MCF 10A (cell line): ENCODE measurements at regions of chr9 and their contacts with region 1.

Region 1: DNA sequence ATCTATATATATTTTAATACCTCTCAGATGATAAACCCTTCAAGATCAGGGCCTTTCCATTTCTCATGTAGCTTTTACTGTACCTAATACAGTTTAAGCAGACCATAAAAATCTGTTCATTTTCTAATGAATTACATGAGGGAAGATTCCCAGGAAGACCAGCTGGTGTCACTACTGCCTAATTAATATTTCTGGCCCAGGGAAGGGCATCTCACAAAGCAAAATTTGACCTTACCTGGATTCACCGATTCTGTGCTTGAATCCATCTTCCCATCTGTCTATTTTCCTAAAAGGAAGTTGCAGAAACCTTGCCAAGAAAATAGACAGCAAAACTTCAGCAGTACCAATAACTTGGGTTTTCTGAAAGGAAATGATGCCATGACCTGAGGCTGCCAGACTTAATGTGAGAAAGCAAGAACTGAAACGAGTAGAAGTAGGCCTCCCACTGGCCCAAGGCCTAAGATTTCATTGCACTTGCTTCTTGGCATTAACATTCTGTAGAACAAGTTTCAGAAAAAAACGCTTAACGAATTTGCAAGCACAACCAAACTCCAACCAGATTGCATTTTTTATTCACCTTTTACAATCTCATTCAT is 83.0 kb upstream of the GLIS3 start:
- DNase-seq: peak; percentile 53
- H3K4me3 Mint-ChIP-seq: no peak overlapping the region
- H3K27ac Mint-ChIP-seq: no peak overlapping the region
- H3K4me1 Mint-ChIP-seq: no peaks in the 10 kb centered on the region
- H3K27me3 Mint-ChIP-seq: no peaks in the 10 kb centered on the region
- CTCF ChIP-seq: peak; percentile 41

Region 2: DNA sequence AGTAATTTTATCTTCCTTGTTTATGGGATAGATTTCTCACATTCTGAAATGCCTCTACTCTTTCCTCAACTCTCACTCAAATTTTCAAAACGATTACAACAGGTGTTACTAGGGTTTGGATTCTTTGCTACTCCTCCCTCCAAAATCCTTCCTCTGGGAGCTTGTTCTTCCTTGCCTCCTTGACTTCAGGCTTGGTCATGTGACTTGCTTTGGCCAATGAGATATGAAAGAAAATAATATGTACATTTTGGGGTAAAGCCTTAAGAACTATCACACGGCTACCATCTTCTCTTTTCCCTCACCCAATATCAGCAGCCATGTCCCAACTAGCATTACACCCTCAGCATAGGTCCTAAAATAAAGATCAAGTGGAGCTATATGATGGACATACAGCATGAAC is 78.6 kb after region 1 on chr9:
- CTCF ChIA-PET with region 1: no interaction called
- POLR2A ChIA-PET with region 1: no interaction called
- intact Hi-C with region 1: no loop called
- DNase-seq: no peak
- H3K4me3 Mint-ChIP-seq: no peak overlapping the region
- H3K27ac Mint-ChIP-seq: no peak overlapping the region
- H3K4me1 Mint-ChIP-seq: no peaks in the 10 kb centered on the region
- H3K27me3 Mint-ChIP-seq: no peaks in the 10 kb centered on the region
- CTCF ChIP-seq: no peak

Region 3: GRCh38 chr9:4548811-4549725 is 166.2 kb after region 1 on chr9:
- CTCF ChIA-PET with region 1: no interaction called
- POLR2A ChIA-PET with region 1: no interaction called
- intact Hi-C with region 1: loop called (anchors 2 kb)
- DNase-seq: no peak
- H3K4me3 Mint-ChIP-seq: no peak overlapping the region
- H3K27ac Mint-ChIP-seq: no peak overlapping the region
- H3K4me1 Mint-ChIP-seq: no peaks in the 10 kb centered on the region
- H3K27me3 Mint-ChIP-seq: peaks cover 11% of the 10 kb centered on the region
- CTCF ChIP-seq: peak; percentile 15

Region 4: DNA sequence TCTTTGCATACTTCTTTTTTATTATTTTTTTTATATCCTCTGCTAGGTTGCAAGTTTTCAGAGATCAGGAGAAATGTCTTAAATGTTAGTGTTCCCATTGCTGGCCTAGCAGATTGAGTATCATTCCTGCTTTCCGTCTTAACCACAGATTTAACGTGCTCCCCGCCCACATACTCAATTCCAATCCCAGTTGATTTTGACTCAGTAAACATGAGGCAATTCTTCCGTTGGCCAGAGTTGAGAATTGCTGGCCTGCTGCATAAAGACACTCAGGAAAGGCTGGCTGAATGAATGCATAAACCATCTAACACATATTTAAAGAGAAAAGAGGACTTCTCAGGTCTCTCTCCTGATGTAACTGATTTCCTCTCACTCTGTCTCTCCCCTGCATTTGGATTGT is 232.4 kb after region 1 on chr9:
- CTCF ChIA-PET with region 1: no interaction called
- POLR2A ChIA-PET with region 1: no interaction called
- intact Hi-C with region 1: no loop called
- DNase-seq: peak; percentile 45
- H3K4me3 Mint-ChIP-seq: no peak overlapping the region
- H3K27ac Mint-ChIP-seq: no peak overlapping the region
- H3K4me1 Mint-ChIP-seq: peaks cover 9% of the 10 kb centered on the region
- H3K27me3 Mint-ChIP-seq: no peaks in the 10 kb centered on the region
- CTCF ChIP-seq: no peak

Region 5: DNA sequence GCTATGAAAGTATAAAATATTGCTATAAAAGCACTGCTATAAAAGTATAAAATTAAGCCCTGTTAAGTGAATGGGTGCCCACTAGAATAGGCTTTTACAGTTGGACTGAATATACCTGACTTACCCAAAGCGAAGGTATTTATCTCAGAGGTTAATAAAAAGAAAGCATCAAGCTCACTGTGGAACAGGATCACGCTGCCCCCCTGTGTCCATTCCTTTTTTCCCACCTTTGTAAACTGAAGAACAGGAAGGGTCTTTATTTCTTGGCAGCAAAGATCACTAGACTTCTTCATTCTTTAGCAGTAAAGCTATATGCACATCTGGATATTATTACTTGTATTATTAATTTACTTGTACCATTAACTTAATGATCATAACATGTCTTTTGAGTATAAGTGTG is 257.2 kb after region 1 on chr9:
- CTCF ChIA-PET with region 1: interaction called, 8 read pairs
- POLR2A ChIA-PET with region 1: no interaction called
- intact Hi-C with region 1: loop called (anchors 2 kb)
- DNase-seq: peak; percentile 38
- H3K4me3 Mint-ChIP-seq: no peak overlapping the region
- H3K27ac Mint-ChIP-seq: no peak overlapping the region
- H3K4me1 Mint-ChIP-seq: no peaks in the 10 kb centered on the region
- H3K27me3 Mint-ChIP-seq: no peaks in the 10 kb centered on the region
- CTCF ChIP-seq: peak; percentile 11

Region 6: DNA sequence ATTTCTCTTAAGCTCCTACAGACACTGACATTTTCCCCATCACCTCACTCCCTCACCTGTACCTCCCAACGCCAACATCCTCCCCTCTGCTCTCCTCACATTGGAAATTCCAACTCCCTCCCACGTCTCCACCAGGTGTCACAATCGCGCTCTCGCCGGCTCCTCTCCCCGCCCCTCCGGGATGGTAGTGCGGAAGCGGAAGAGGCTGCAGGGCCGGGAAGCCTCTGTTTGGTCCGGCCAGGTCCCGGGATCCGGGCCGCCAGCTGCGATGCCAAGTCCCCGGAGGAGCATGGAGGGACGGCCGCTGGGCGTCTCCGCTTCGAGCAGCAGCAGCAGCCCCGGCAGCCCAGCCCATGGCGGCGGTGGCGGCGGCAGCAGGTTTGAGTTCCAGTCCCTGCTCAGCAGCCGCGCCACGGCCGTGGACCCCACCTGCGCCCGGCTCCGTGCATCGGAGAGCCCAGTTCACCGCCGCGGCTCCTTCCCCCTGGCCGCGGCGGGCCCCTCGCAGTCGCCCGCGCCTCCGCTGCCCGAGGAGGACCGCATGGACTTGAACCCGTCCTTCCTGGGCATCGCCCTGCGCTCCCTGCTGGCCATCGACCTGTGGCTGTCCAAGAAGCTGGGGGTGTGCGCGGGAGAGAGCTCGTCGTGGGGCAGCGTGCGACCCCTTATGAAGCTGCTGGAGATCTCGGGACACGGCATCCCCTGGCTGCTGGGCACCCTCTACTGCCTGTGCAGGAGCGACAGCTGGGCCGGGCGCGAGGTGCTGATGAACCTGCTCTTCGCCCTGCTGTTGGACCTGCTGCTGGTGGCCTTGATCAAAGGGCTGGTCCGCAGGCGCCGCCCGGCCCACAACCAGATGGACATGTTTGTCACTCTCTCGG is 279.5 kb after region 1 on chr9 and contains the start of gene PLPP6:
- CTCF ChIA-PET with region 1: interaction called, 4 read pairs
- POLR2A ChIA-PET with region 1: no interaction called
- intact Hi-C with region 1: loop called (anchors 10 kb)
- DNase-seq: peak; percentile 93
- H3K4me3 Mint-ChIP-seq: peak within 1 kb of the TSS; percentile 72
- H3K27ac Mint-ChIP-seq: peak within 1 kb of the TSS; percentile 65
- H3K4me1 Mint-ChIP-seq: peaks cover 40% of the 10 kb centered on the region
- H3K27me3 Mint-ChIP-seq: no peaks in the 10 kb centered on the region
- CTCF ChIP-seq: peak; percentile 29
- total RNA-seq, gene PLPP6: 6.3 and 8.3 TPM in 2 replicates

Region 7: DNA sequence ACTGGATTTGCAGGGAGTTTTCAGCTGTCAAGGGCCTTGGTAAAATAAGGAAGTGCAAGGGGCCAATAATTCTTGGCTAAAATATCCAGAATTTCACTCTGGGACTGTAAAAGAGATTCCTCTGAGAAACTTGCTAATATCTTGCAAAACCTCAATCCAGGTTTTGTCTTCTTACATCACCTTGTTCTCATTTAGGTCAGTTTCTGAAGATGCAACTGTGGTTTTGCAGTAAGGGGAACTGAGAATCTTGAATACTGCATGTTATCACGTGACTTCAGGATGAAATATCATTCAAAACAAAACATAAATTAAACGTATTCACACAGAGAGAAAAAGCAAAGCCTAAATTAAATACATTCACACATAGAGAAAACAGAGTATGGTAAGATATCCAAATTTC is 1211.1 kb after region 1 on chr9:
- CTCF ChIA-PET with region 1: interaction called, 3 read pairs
- POLR2A ChIA-PET with region 1: no interaction called
- intact Hi-C with region 1: loop called (anchors 5 kb)
- DNase-seq: no peak
- H3K4me3 Mint-ChIP-seq: no peak overlapping the region
- H3K27ac Mint-ChIP-seq: no peak overlapping the region
- H3K4me1 Mint-ChIP-seq: no peaks in the 10 kb centered on the region
- H3K27me3 Mint-ChIP-seq: no peaks in the 10 kb centered on the region
- CTCF ChIP-seq: no peak